Esophagus squamous epithelium (tissue), 5 donors: ENCODE measurements at regions of chr1 and their contacts with region 1.

Region 1: GRCh38 chr1:174982971-174983689 is 16.6 kb upstream of the CACYBP start:
- DNase-seq: no peak
- H3K4me3 ChIP-seq: no peak overlapping the region
- H3K27ac ChIP-seq: no peak overlapping the region
- H3K4me1 ChIP-seq: no peaks in the 10 kb centered on the region
- H3K27me3 ChIP-seq: no peaks in the 10 kb centered on the region
- CTCF ChIP-seq: peak; percentile 43 to 77 (median 68)
- POLR2A ChIP-seq: no peak

Region 2: DNA sequence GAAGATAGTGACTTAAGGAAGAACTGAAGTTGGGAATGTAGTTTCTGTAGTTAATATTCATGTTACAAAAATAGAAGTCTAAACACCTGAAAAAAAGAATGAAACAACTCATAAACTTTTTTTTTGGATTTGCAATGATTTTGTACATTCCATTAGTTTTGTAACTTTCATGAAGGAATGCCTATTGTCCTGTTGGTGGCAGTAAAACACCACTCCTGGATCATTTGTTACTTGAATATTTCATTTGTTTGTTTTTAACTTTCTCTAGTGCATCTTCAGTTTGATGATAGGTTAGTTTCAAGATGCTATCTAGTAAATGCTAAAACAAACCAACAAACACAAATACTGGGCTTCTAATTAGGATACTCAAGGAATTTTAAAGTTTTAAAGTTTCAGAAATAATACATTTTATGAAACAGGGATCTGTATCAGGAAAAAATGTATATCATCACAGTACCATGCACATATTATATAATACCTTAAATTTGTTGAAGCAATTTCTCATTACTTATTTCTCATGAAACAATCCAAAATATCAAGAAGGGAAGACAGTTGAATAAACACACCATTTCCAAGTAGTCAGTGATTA is 213.1 kb before region 1 on chr1:
- intact Hi-C with region 1: loop called (anchors 10 kb)
- DNase-seq: no peak
- H3K4me3 ChIP-seq: no peak overlapping the region
- H3K27ac ChIP-seq: no peak overlapping the region
- H3K4me1 ChIP-seq: no peaks in the 10 kb centered on the region
- H3K27me3 ChIP-seq: no peaks in the 10 kb centered on the region
- CTCF ChIP-seq: peak; percentile 31 to 80 (median 62)
- POLR2A ChIP-seq: no peak

Region 3: DNA sequence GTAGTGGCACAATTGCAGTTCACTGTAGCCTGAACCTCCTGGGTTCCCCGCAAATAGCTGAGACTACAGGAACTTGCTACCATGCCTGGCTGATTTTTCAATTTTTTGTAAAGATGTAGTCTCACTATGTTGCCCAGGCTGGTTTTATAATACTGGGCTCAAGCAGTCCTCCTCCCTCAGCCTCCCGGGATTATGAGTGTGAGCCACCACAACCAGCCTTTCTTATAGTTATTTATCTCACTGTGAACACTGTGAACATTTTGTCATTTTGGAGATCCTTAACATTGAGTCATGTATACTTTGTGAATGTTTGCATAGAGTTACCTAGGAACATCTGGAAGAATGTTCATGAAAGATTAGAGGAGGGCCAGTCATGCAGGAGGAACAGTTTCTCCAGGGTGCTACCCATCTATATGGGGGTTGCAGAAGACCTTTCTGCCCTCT is 110.5 kb before region 1 on chr1:
- intact Hi-C with region 1: no loop called
- DNase-seq: no peak
- H3K4me3 ChIP-seq: no peak overlapping the region
- H3K27ac ChIP-seq: peak overlapping the region in 3 of 4 donors; percentile 68 to 84 (median 83)
- H3K4me1 ChIP-seq: peaks cover 0 to 51% (median 0%) of the 10 kb centered on the region in 3 donors
- H3K27me3 ChIP-seq: no peaks in the 10 kb centered on the region
- CTCF ChIP-seq: no peak
- POLR2A ChIP-seq: no peak

Region 4: GRCh38 chr1:174883409-174883808 is 99.7 kb before region 1 on chr1:
- intact Hi-C with region 1: loop called (anchors 10 kb)
- DNase-seq: no peak
- H3K4me3 ChIP-seq: no peak overlapping the region
- H3K27ac ChIP-seq: no peak overlapping the region
- H3K4me1 ChIP-seq: peaks cover 0 to 9% (median 0%) of the 10 kb centered on the region in 3 donors
- H3K27me3 ChIP-seq: no peaks in the 10 kb centered on the region
- CTCF ChIP-seq: peak in 1 of 6 experiments; percentile 9
- POLR2A ChIP-seq: no peak